Activated CD4-positive, alpha-beta memory T cell treated with anti-CD3 and anti-CD28 coated beads, Interleukin-2, amount 10 ng/mL, durations not matched to agents 7 days and 5 days (primary cell): ENCODE measurements at regions of chr3 and their contacts with region 1.

Region 1: DNA sequence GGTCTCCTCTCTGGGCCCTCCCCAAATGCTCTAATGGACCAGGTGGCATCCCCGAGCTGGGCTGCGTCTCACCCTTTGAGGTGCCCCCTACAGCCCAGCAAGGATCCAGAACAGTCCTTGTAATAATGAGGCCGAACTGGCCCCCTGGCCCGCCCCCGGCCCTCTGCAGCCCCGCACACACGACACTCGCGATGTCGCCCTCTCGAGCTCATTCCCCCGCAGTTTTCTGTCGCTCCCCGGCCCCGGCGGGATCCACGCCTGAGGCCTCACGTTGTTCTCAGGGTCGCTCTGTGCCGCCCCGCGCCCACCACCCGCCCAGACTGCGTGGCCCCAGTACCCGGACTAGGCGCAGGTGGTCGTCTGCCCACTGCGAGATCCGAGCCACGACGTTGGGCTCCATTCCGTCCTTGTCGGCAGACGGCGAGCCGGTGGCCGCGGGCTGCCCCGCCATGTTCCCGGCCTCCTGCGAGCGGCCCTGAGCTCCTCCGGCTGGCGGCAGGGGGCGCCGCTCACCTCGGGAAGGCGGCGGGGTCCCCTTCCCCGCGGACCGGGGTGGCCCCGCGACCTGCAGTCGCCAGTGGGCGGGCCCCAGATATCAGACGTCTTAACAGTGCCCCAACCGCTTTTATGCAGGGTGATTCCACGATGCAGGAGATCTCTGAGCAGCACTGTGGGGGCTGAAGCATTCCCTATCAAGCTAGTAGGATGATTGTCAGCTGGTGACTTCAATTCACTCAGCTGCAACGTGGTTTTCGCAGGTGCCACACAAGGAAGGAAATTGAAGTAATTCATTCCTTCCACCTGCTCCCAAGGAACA is at the start of gene C3orf33:
- DNase-seq: peak; percentile 75
- H3K4me3 Mint-ChIP-seq: peak within 1 kb of the TSS; percentile 81
- H3K27ac Mint-ChIP-seq: peak within 1 kb of the TSS; percentile 15
- H3K4me1 Mint-ChIP-seq: peaks cover 10% of the 10 kb centered on the region
- H3K27me3 Mint-ChIP-seq: peaks cover 14% of the 10 kb centered on the region
- total RNA-seq, gene C3orf33: 0.48 to 0.86 TPM

Region 2: DNA sequence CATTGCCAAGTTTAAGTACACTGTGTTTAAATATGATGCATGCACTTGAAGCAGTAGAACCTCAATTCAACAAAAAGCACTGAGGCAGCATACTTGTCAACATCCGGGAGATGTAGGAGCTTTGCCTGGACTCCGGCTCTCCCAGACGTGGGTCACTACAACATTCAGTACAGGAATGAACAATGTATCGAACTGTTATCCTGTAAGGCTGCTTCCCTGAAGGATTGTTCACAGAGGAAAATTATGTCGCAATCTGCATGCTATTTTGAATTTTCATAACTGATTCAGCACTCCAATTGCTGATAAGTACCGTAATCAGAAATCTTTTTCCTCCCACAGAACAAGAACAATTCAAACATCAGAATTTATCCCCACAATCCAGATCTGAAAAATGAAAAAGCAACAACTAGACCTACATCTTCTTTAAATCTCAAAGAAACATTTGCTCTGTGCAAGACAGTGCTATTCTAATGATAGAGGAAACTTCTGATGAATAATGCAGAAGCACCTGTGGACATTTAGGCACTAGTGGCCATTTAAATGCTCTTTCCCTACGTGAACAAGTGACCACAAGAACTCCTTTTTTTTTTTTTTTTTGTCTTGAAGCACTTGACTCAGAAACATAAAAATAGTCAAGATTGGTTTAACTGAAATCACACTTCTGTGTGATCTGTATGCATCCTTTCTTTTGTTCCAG is 174.5 kb before region 1 on chr3:
- CTCF ChIA-PET with region 1: no interaction called
- POLR2A ChIA-PET with region 1: no interaction called
- DNase-seq: no peak
- H3K4me3 Mint-ChIP-seq: no peak overlapping the region
- H3K27ac Mint-ChIP-seq: no peak overlapping the region
- H3K4me1 Mint-ChIP-seq: no peaks in the 10 kb centered on the region
- H3K27me3 Mint-ChIP-seq: peaks cover 2% of the 10 kb centered on the region

Region 3: DNA sequence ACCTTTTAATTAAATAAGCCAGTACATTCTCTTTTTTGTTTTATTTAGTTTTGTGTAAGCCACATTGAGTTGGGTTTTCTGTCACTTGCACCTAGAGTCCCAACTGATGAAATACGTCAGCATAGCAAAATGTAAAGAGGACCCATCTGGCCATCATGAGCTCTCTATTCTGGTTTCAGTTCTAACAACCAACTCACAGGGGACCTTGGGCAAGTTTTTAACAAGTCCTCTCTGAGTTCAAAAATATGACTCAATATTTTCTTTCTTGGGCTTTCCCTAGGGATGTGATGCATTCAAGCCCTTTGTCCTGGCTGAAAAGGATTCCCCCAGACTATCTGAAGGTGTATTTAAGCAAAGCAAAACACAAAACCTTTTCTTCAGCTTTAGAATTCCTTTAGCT is 94.0 kb before region 1 on chr3:
- CTCF ChIA-PET with region 1: interaction called, 10 read pairs
- POLR2A ChIA-PET with region 1: no interaction called
- DNase-seq: no peak
- H3K4me3 Mint-ChIP-seq: no peak overlapping the region
- H3K27ac Mint-ChIP-seq: no peak overlapping the region
- H3K4me1 Mint-ChIP-seq: no peaks in the 10 kb centered on the region
- H3K27me3 Mint-ChIP-seq: no peaks in the 10 kb centered on the region

Region 4: DNA sequence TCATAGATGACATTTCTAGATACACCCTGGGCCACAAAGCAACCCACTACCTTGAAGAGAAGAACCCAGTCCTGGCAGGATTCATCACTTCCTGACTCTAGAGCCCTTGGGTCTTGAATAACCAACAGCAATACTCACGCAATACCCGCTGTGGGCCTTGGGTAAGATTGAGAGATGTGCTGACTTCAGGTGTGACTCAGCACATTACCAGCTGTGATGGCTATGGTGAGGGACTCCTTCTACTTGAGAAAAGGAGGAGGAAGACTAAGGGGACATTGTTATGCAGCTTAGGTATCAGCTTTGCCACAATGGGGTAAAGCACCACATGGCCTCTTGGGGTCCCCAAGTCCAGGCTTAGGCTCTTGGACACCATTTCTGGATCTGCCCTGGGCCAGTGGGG is 14.8 kb before region 1 on chr3:
- CTCF ChIA-PET with region 1: interaction called, 33 read pairs
- POLR2A ChIA-PET with region 1: no interaction called
- DNase-seq: no peak
- H3K4me3 Mint-ChIP-seq: no peak overlapping the region
- H3K27ac Mint-ChIP-seq: no peak overlapping the region
- H3K4me1 Mint-ChIP-seq: no peaks in the 10 kb centered on the region
- H3K27me3 Mint-ChIP-seq: no peaks in the 10 kb centered on the region

Region 5: DNA sequence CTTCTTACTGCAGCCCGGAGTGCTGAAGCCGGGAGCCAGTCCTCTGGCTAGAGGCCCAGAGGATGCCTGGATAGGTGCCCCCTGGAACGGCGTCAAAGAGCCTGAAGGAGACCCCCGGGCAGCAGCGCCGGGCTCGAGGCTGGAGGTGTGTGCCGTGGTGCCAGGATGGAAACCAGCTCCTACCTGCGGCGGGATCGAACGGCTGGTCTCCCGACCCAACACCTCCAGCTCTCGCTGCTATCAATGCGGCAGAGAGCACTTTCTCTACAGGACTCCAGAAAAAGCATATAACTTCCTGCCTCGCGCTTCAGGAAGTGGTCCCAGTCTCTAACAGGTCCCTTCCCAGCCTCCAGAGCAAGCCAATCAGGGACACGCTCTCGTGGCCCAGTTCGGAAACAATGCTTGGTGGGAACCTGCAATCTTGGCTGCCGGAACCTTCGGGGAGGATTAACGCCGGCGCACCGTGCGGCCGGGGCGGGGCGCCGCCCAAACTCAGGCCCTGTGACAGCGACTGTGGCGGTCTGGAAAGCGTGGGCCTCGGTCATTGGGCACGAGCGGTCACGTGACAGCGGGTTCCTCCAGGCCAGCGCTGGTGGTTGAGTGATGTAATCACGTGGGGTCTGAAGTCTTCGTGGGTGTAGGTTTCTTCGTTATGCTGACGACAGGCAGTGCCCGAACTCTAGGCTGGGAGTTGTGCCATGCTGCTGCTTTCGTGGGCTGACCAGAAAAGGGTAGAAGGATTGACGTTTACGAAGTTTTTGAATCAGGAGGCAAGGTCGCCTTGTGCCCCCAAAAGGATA is 48.3 kb after region 1 on chr3 and contains the start of gene SLC33A1:
- CTCF ChIA-PET with region 1: interaction called, 45 read pairs
- POLR2A ChIA-PET with region 1: interaction called, 30 read pairs
- DNase-seq: peak; percentile 99
- H3K4me3 Mint-ChIP-seq: peak within 1 kb of the TSS; percentile 97
- H3K27ac Mint-ChIP-seq: peak within 1 kb of the TSS; percentile 100
- H3K4me1 Mint-ChIP-seq: peaks cover 37% of the 10 kb centered on the region
- H3K27me3 Mint-ChIP-seq: no peaks in the 10 kb centered on the region
- total RNA-seq, gene SLC33A1: 31.6 to 34.2 TPM

Region 6: GRCh38 chr3:155886915-155887314 is 80.9 kb after region 1 on chr3:
- CTCF ChIA-PET with region 1: interaction called, 23 read pairs
- POLR2A ChIA-PET with region 1: no interaction called
- DNase-seq: no peak
- H3K4me3 Mint-ChIP-seq: no peak overlapping the region
- H3K27ac Mint-ChIP-seq: no peak overlapping the region
- H3K4me1 Mint-ChIP-seq: peaks cover 40% of the 10 kb centered on the region
- H3K27me3 Mint-ChIP-seq: no peaks in the 10 kb centered on the region

Region 7: DNA sequence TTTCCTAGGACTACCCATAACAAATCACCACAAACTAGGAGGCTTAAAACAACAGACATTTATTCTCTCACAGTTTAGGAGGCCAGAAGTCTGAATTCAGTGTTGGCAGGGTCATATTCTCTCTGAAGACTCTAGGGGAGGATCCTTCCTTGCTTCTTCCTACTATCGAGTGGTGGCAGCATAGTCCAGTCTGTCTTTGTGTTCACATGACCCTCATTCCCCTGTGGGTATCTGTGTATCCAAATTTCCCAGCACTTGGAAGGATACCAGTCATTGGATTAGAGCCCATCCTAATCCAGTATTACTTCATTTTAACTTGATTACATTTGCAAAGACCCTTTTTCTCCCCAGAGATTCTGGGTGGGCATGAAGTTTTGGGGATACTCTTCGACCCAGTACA is 128.2 kb after region 1 on chr3:
- CTCF ChIA-PET with region 1: interaction called, 30 read pairs
- POLR2A ChIA-PET with region 1: interaction called, 3 read pairs
- DNase-seq: no peak
- H3K4me3 Mint-ChIP-seq: no peak overlapping the region
- H3K27ac Mint-ChIP-seq: no peak overlapping the region
- H3K4me1 Mint-ChIP-seq: no peaks in the 10 kb centered on the region
- H3K27me3 Mint-ChIP-seq: no peaks in the 10 kb centered on the region